ENCODE measurements at regions of chr21 and their contacts with region 1.

Region 1: GRCh38 chr21:26715878-26716506 is 129.2 kb downstream of the ADAMTS1 start:
- DNase-seq: no peak
- ATAC-seq: peak; percentile 29; the same call in 1 of the 3 replicates
- H3K4me3 ChIP-seq: no peak overlapping the region
- H3K27ac ChIP-seq: no peak overlapping the region
- H3K4me1 ChIP-seq: no peaks in the 10 kb centered on the region
- H3K27me3 ChIP-seq: no peaks in the 10 kb centered on the region
- CTCF ChIP-seq: peak; percentile 50 to 54 (median 50); a peak in 5 of 6 replicates
- EP300 ChIP-seq: no peak
- POLR2A ChIP-seq: no peak
- RAD21 ChIP-seq: peak; percentile 32; the same call in 1 of the 2 replicates

Region 2: DNA sequence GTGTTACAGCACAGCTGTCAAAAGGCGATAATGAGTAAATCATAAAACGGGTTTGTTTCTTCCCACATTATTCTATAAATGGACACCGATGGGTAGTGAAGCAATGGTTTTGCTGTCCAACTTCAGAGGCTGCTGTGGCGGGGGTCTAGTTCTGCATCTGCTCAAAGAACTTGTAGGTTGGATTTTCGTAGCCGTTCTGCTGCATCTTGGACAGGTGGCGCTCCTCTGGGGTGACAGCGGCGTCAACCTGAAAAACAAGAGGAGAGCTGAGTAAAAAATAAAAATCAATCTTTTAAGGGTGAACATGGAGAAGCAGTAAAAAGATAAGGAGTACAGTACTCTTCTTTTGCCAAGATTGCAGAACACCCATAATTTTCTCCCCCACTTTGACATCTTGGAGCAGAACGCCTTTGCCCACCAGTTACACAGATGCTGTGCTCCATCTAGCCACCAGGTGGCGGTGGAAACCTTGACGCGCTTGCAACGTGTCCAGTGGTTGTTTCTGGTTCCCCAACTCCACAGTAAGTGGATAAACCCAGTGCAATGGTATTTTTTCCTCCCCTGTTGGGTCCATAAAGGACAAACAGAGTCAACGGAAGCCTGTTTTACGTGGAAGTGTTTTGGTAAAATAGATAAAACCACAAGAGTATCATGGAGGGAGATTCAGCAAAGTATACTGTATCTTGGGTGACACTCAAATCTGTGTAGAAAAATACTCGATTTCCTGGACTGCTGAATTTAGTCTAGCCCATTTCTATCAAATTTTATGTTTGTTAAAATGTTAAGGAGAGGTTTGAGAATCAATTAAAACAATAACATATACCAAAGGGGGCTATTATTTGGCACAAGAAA is 834.2 kb before region 1 on chr21:
- CTCF ChIA-PET with region 1: interaction called, 5 read pairs
- POLR2A ChIA-PET with region 1: no interaction called
- RAD21 ChIA-PET with region 1: no interaction called
- SMC1A ChIA-PET with region 1: interaction called, 4 read pairs
- in situ Hi-C with region 1: loop called (anchors 5 kb)
- intact Hi-C with region 1: loop called (anchors 1 kb)
- DNase-seq: peak; percentile 9
- ATAC-seq: peak; percentile 95
- H3K4me3 ChIP-seq: no peak overlapping the region
- H3K27ac ChIP-seq: no peak overlapping the region
- H3K4me1 ChIP-seq: no peaks in the 10 kb centered on the region
- H3K27me3 ChIP-seq: no peaks in the 10 kb centered on the region
- CTCF ChIP-seq: peak; percentile 77 to 97 (median 96)
- EP300 ChIP-seq: no peak
- POLR2A ChIP-seq: no peak
- RAD21 ChIP-seq: peak; percentile 89

Region 3: DNA sequence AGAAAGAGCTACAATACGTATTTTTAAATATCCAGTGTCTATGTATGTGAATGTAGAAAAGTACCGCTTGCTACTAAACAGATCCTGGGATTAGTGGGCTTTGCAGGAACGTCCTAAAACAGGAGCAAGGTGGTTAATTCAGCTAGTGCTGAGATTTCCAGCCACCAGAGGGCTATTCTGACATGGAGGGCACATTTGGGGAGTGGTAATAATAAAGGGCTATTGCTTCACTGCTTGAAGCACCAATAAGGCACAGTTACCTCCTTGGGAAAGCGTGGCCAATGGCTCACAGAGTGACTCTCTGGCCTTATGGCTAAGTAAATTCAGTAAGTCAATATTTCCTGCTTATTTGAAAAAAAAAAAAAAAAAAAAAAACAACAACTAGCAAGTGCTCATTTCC is 828.8 kb before region 1 on chr21:
- CTCF ChIA-PET with region 1: interaction called, 4 read pairs
- POLR2A ChIA-PET with region 1: no interaction called
- RAD21 ChIA-PET with region 1: no interaction called
- SMC1A ChIA-PET with region 1: no interaction called
- in situ Hi-C with region 1: loop called (anchors 5 kb)
- intact Hi-C with region 1: no loop called
- DNase-seq: no peak
- ATAC-seq: no peak
- H3K4me3 ChIP-seq: no peak overlapping the region
- H3K27ac ChIP-seq: no peak overlapping the region
- H3K4me1 ChIP-seq: no peaks in the 10 kb centered on the region
- H3K27me3 ChIP-seq: no peaks in the 10 kb centered on the region
- CTCF ChIP-seq: 0 out of 6 replicates have a peak, but pooled peaks of 1 of the 3 experiments have one; percentile 8
- EP300 ChIP-seq: no peak
- POLR2A ChIP-seq: no peak
- RAD21 ChIP-seq: no peak

Region 4: DNA sequence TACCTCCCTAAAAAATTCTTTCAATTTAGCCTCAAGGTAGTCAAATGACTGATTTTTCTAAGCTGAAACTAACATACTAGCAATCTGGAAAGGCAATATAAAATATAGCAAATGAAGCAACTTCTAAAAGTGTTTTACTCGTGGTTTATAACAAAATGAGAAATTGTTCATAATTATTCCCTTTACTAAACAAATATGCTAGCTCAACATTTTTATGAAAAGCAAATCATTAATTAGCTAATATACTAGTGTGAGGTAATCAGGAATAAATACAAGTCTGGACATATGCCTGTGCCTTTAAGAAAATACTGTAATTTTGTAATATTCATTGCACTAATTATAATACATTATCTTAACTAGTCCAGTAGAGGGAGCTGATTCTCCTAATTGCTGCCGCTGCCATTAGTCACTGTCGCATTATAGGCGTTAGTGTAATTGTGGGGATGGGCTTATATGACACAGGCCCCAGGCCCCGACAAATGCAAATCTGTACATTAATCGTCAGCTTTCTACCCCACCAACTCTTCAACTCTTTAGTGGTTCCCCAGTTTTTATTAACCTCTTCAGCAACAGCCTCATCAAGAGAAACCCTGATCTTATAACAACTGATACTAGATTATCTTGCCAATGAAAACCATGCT is 820.3 kb before region 1 on chr21:
- CTCF ChIA-PET with region 1: no interaction called
- POLR2A ChIA-PET with region 1: no interaction called
- RAD21 ChIA-PET with region 1: no interaction called
- SMC1A ChIA-PET with region 1: no interaction called
- in situ Hi-C with region 1: no loop called
- intact Hi-C with region 1: loop called (anchors 5 kb)
- DNase-seq: no peak
- ATAC-seq: peak; percentile 73
- H3K4me3 ChIP-seq: no peak overlapping the region
- H3K27ac ChIP-seq: no peak overlapping the region
- H3K4me1 ChIP-seq: no peaks in the 10 kb centered on the region
- H3K27me3 ChIP-seq: no peaks in the 10 kb centered on the region
- CTCF ChIP-seq: peak; percentile 26 to 43 (median 42); a peak in 4 of 6 replicates
- EP300 ChIP-seq: no peak
- POLR2A ChIP-seq: no peak
- RAD21 ChIP-seq: peak; percentile 77

Region 5: GRCh38 chr21:26669215-26669764 is 46.7 kb before region 1 on chr21:
- CTCF ChIA-PET with region 1: no interaction called
- POLR2A ChIA-PET with region 1: no interaction called
- RAD21 ChIA-PET with region 1: no interaction called
- SMC1A ChIA-PET with region 1: no interaction called
- in situ Hi-C with region 1: no loop called
- intact Hi-C with region 1: no loop called
- DNase-seq: no peak
- ATAC-seq: no peak
- H3K4me3 ChIP-seq: no peak overlapping the region
- H3K27ac ChIP-seq: no peak overlapping the region
- H3K4me1 ChIP-seq: no peaks in the 10 kb centered on the region
- H3K27me3 ChIP-seq: no peaks in the 10 kb centered on the region
- CTCF ChIP-seq: no peak
- EP300 ChIP-seq: no peak
- POLR2A ChIP-seq: no peak
- RAD21 ChIP-seq: no peak